PC-3 (cell line): ENCODE measurements at regions of chr19 and their contacts with region 1.

Region 1: GRCh38 chr19:8580710-8581281 is 3.6 kb upstream of the MYO1F start:
- DNase-seq: peak; percentile 83
- ATAC-seq: peak; percentile 58
- H3K4me3 ChIP-seq: no peak overlapping the region
- H3K27ac ChIP-seq: no peak overlapping the region
- H3K4me1 ChIP-seq: peaks cover under 1% of the 10 kb centered on the region; the same call in 1 of the 2 replicates
- H3K27me3 ChIP-seq: no peaks in the 10 kb centered on the region
- CTCF ChIP-seq: peak; percentile 100

Region 2: GRCh38 chr19:8412783-8413628 is 167.8 kb before region 1 on chr19 and contains the start of gene MARCHF2:
- CTCF ChIA-PET with region 1: interaction called, 18 read pairs
- POLR2A ChIA-PET with region 1: no interaction called
- intact Hi-C with region 1: loop called (anchors 5 kb)
- DNase-seq: peak; percentile 99
- ATAC-seq: peak; percentile 100
- H3K4me3 ChIP-seq: peak within 1 kb of the TSS; percentile 79
- H3K27ac ChIP-seq: no peak within 1 kb of the TSS
- H3K4me1 ChIP-seq: peaks cover 6% of the 10 kb centered on the region
- H3K27me3 ChIP-seq: no peaks in the 10 kb centered on the region
- CTCF ChIP-seq: peak; percentile 68
- total RNA-seq, gene MARCHF2: 58.6 and 58.7 TPM in 2 replicates

Region 3: DNA sequence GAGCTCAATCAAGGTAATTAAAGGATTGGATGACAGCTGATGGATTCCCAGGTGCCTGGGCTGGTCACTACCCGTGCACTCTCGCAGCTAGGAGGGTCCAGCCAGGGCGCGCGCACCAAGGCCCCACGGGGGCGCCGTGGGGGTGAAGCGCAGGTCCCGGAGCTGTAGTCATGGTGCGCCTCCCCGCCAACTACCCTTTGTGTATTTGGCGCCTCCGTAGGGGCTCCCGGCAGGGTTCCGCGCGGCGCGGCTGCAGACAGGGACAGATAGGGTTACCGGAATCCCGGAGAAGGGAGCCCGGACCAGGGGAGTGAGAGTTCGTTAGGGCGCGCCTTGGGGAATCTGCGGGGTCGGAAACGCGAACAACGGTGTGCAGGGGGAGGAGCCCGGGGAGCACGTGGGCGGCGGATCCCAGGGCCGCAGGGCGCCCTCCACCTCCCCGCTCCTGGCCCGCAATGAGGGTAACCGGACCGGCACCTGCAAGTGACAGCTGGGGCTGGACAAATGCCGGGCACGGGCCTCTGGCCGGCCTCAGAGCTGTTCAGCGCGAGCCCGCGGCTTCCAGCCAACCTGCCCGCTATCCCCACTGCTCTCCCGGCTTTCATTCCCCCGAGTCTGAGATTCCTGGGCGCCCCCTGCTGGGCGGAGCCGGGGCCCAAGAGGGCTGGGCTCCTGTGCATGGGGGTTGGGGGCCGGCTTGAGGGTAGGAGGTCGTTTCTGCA is 75.0 kb before region 1 on chr19:
- CTCF ChIA-PET with region 1: interaction called, 6 read pairs
- POLR2A ChIA-PET with region 1: no interaction called
- intact Hi-C with region 1: loop called (anchors 5 kb)
- DNase-seq: peak; percentile 87
- ATAC-seq: peak; percentile 90
- H3K4me3 ChIP-seq: peak overlapping the region; percentile 76
- H3K27ac ChIP-seq: peak overlapping the region; percentile 1; the same call in 1 of the 2 replicates
- H3K4me1 ChIP-seq: no peaks in the 10 kb centered on the region
- H3K27me3 ChIP-seq: no peaks in the 10 kb centered on the region
- CTCF ChIP-seq: peak; percentile 99

Region 4: DNA sequence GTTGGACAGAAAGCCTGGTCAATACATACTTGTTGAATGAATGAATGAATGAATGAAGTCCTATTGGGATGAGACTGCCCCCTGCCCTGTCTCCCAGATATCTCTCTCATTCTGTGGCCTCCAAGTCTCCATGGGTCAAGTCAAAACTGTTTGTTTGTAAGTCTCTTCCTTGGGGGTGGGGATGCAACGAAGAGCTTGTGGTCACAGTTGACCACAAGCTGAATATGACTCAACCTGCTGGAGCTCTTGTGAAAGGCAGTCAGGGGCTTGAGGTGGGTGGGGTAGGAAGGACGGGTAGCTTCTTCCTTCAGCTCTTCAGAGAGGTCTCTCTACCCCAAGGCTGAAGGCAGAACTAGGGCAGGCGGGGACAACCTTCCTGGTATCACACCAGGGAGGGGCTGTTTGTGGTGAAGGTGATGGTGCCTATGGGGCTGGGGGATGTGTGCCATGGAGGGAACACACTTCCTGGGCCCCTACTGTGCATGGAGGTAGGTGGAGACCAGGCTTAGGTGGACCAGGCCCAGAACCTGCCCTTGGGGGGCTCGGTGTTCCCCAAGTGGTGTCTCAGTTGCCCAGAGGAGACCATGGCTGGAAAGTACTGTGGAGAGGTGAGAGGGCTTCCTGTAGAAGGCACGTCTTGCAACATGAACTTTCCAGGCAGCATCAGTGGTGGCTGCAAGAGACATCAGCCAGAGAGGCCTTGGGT is 11.6 kb before region 1 on chr19:
- CTCF ChIA-PET with region 1: interaction called, 22 read pairs
- POLR2A ChIA-PET with region 1: no interaction called
- intact Hi-C with region 1: no loop called
- DNase-seq: peak; percentile 96
- ATAC-seq: peak; percentile 75
- H3K4me3 ChIP-seq: no peak overlapping the region
- H3K27ac ChIP-seq: no peak overlapping the region
- H3K4me1 ChIP-seq: peaks cover 26% of the 10 kb centered on the region
- H3K27me3 ChIP-seq: no peaks in the 10 kb centered on the region
- CTCF ChIP-seq: peak; percentile 26; the same call in 1 of the 2 replicates

Region 5: GRCh38 chr19:8609279-8610040 is 28.7 kb after region 1 on chr19:
- CTCF ChIA-PET with region 1: no interaction called
- POLR2A ChIA-PET with region 1: no interaction called
- intact Hi-C with region 1: no loop called
- DNase-seq: no peak
- ATAC-seq: no peak
- H3K4me3 ChIP-seq: no peak overlapping the region
- H3K27ac ChIP-seq: no peak overlapping the region
- H3K4me1 ChIP-seq: no peaks in the 10 kb centered on the region
- H3K27me3 ChIP-seq: peaks cover 8% of the 10 kb centered on the region
- CTCF ChIP-seq: no peak

Region 6: GRCh38 chr19:8648240-8648639 is 67.4 kb after region 1 on chr19:
- CTCF ChIA-PET with region 1: interaction called, 15 read pairs
- POLR2A ChIA-PET with region 1: no interaction called
- intact Hi-C with region 1: loop called (anchors 2 kb)
- DNase-seq: no peak
- ATAC-seq: no peak
- H3K4me3 ChIP-seq: no peak overlapping the region
- H3K27ac ChIP-seq: no peak overlapping the region
- H3K4me1 ChIP-seq: no peaks in the 10 kb centered on the region
- H3K27me3 ChIP-seq: peaks cover 38% of the 10 kb centered on the region
- CTCF ChIP-seq: no peak